ENCODE measurements at regions of chr2 and their contacts with region 1.

Region 1: GRCh38 chr2:3899536-3900155 is 196.3 kb downstream of the DCDC2C start:
- DNase-seq: no peak
- H3K4me3 ChIP-seq: no peak overlapping the region
- H3K27ac ChIP-seq: no peak overlapping the region
- H3K4me1 ChIP-seq: no peaks in the 10 kb centered on the region
- H3K27me3 ChIP-seq: no peaks in the 10 kb centered on the region
- CTCF ChIP-seq: no peak
- EP300 ChIP-seq: no peak
- POLR2A ChIP-seq: no peak

Region 2: DNA sequence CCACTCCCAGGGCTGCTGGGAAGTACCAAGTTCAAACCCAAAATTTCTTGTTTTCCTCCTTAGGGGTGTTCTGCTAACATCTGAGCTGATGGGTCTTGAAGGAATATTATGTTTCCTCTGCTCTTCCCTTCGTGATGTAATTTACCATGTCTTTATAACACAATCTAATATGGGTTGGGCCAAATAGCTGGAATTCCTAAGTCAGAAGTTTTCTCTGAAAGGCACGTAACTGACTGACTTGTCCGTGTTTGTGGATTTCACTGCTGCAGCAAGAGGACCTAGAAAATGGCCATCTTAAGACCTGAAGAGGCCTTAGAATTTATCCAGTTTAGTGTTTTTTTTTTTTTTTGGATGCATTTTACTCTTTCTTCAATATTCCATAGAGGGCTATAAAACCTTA is 60.5 kb after region 1 on chr2:
- intact Hi-C with region 1: loop called in 1 of 4 experiments (anchors 2 kb)
- DNase-seq: no peak
- H3K4me3 ChIP-seq: no peak overlapping the region
- H3K27ac ChIP-seq: no peak overlapping the region
- H3K4me1 ChIP-seq: no peaks in the 10 kb centered on the region
- H3K27me3 ChIP-seq: no peaks in the 10 kb centered on the region
- CTCF ChIP-seq: no peak
- EP300 ChIP-seq: no peak
- POLR2A ChIP-seq: no peak

Measured in ovary (tissue), 10 donors.